Endothelial cell of umbilical vein (primary cell): ENCODE measurements at regions of chr12 and their contacts with region 1.

Region 1: DNA sequence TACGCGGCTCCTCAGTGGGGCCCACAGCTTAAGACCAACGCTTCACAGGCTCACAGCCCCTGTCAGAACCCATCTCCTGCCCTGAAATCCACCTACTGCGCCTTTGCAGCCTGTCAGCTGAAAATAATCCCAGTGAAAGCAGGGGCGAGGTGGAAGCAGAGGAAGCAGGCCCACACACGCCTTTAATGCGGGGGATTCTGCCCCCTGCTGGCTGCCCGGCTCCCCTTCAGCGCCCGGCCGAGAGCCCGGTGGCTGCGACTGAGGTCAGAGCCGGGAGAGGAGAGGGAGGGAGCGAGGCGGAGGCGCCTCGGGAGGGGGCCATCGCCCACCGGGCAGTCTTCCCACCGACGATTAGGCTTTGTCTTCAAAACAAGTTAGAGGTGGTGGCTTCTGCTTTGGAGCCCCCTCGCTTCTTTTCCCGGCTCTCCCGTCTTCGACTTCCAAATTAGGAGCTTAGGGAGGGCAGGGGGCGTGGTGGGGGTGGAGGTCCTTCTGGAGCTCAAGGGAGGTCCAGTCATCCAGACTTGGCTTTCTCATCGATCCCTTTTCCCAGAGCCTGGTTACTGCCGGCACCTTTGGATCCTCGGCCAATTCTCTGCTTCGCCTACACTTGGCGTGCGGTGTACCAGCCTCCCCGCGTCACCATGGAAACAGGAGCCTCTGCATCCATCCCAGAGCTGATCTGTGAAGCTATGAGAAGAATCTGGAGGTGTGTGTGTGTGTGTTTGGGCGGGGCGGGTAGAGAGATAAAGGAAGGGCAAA is 25.2 kb upstream of the RND1 start:
- DNase-seq: peak; percentile 76
- H3K4me3 ChIP-seq: no peak overlapping the region
- H3K27ac ChIP-seq: no peak overlapping the region
- H3K4me1 ChIP-seq: no peaks in the 10 kb centered on the region
- H3K27me3 ChIP-seq: peaks cover 5 to 7% of the 10 kb centered on the region in 2 experiments
- CTCF ChIP-seq: peak; percentile 95
- POLR2A ChIP-seq: no peak

Region 2: GRCh38 chr12:48690990-48691389 is 199.8 kb before region 1 on chr12:
- CTCF ChIA-PET with region 1: no interaction called
- POLR2A ChIA-PET with region 1: no interaction called
- dilution Hi-C with region 1: no loop called
- intact Hi-C with region 1: no loop called
- DNase-seq: no peak
- H3K4me3 ChIP-seq: no peak overlapping the region
- H3K27ac ChIP-seq: no peak overlapping the region
- H3K4me1 ChIP-seq: no peaks in the 10 kb centered on the region
- H3K27me3 ChIP-seq: no peaks in the 10 kb centered on the region
- CTCF ChIP-seq: no peak
- POLR2A ChIP-seq: no peak

Region 3: DNA sequence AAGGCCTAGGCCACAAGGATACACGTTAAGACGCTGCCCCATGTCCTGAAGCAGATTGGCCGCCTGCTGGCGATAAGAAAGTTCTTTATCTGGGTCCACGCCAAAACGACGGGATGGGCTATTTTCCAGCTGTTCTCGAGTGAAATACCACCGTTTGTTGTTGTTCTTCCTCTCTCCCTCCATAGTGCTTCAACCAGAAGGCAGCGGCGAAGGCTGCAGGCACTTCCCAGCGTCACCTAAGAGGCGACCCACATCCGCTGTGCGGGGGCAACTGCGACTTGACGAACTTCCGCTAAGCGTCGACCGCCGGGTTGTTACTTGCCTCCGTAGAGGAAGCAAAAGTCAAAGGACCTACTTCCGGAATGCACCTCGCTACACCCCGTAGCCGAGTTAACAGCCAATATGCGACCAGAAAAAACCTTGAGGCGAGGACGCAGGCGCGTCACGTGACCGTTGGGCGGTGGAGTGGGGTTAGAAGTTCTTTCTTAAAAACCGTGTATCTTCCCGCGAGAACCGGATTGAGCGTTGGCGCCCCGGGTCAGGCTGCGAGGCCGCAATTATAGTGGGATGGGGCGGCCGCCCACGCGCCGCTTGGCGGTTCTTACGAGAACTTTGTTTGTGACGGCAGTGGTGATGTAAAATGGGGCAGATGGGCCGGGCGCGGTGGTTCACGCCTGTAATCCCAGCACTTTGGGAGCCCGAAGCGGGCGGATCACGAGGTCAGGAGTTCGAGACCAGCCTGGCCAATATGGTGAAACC is 174.2 kb before region 1 on chr12 and contains the start of gene CCNT1:
- CTCF ChIA-PET with region 1: no interaction called
- POLR2A ChIA-PET with region 1: no interaction called
- dilution Hi-C with region 1: no loop called
- intact Hi-C with region 1: no loop called
- DNase-seq: peak; percentile 100
- H3K4me3 ChIP-seq: peak within 1 kb of the TSS; percentile 65 to 92 (median 71)
- H3K27ac ChIP-seq: peak within 1 kb of the TSS; percentile 90
- H3K4me1 ChIP-seq: peaks cover 16% of the 10 kb centered on the region
- H3K27me3 ChIP-seq: no peaks in the 10 kb centered on the region
- CTCF ChIP-seq: peak; percentile 10 to 31
- POLR2A ChIP-seq: peak; percentile 61
- total RNA-seq, gene CCNT1: 33.0 and 35.1 TPM in 2 replicates

Region 4: GRCh38 chr12:48814262-48815125 is 76.3 kb before region 1 on chr12:
- CTCF ChIA-PET with region 1: interaction called, 3 read pairs
- POLR2A ChIA-PET with region 1: no interaction called
- dilution Hi-C with region 1: no loop called
- intact Hi-C with region 1: loop called (anchors 2 kb)
- DNase-seq: peak; percentile 73
- H3K4me3 ChIP-seq: peak overlapping the region; percentile 45 to 63 (median 54)
- H3K27ac ChIP-seq: peak overlapping the region; percentile 10
- H3K4me1 ChIP-seq: peaks cover 20% of the 10 kb centered on the region
- H3K27me3 ChIP-seq: no peaks in the 10 kb centered on the region
- CTCF ChIP-seq: peak; percentile 98 to 100
- POLR2A ChIP-seq: no peak

Region 5: GRCh38 chr12:48873096-48873495 is 17.7 kb before region 1 on chr12:
- CTCF ChIA-PET with region 1: interaction called, 68 read pairs
- POLR2A ChIA-PET with region 1: no interaction called
- dilution Hi-C with region 1: no loop called
- intact Hi-C with region 1: no loop called
- DNase-seq: no peak
- H3K4me3 ChIP-seq: no peak overlapping the region
- H3K27ac ChIP-seq: no peak overlapping the region
- H3K4me1 ChIP-seq: no peaks in the 10 kb centered on the region
- H3K27me3 ChIP-seq: no peaks in the 10 kb centered on the region
- CTCF ChIP-seq: no peak
- POLR2A ChIP-seq: no peak

Region 6: DNA sequence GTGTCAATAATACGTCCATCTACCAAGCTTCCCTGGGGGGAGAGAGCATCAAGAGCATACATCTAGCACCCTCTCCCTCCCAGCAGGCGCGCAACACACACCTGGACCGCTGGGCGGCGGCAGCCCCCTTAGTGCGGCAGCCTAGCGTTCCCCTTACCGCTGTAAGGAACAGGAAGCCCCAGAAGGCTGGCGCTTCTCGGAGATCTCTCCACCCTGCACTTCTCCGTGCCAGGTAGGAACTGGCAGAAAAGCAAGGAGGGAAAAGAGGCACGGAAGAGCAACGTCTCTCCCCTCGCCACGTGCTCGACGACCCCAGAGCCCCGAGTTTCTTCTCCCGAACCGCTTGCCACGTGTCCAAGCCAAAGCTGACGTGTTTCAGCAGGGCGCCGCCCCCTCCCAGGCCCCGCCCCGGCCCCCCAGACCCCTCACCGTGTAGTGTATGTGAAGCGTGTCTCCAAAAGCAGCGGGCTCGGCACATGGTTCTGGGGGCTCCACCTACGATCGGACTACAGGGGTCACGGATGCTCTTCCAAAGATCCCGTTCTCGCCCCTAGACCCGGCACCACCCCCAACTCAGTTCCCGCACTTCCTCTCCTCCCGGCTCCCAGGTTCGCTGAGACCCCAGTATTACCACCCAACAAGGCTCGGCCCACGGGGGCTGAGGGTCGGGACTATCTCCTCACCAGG is 33.9 kb after region 1 on chr12:
- CTCF ChIA-PET with region 1: interaction called, 14 read pairs
- POLR2A ChIA-PET with region 1: no interaction called
- dilution Hi-C with region 1: no loop called
- intact Hi-C with region 1: no loop called
- DNase-seq: peak; percentile 78
- H3K4me3 ChIP-seq: peak overlapping the region; percentile 77 to 98 (median 86)
- H3K27ac ChIP-seq: peak overlapping the region; percentile 56
- H3K4me1 ChIP-seq: peaks cover 11% of the 10 kb centered on the region
- H3K27me3 ChIP-seq: no peaks in the 10 kb centered on the region
- CTCF ChIP-seq: peak; percentile 45 to 72
- POLR2A ChIP-seq: no peak

Region 7: GRCh38 chr12:48988030-48988649 is 97.3 kb after region 1 on chr12:
- CTCF ChIA-PET with region 1: interaction called, 13 read pairs
- POLR2A ChIA-PET with region 1: no interaction called
- dilution Hi-C with region 1: no loop called
- intact Hi-C with region 1: no loop called
- DNase-seq: peak; percentile 61
- H3K4me3 ChIP-seq: no peak overlapping the region
- H3K27ac ChIP-seq: no peak overlapping the region
- H3K4me1 ChIP-seq: no peaks in the 10 kb centered on the region
- H3K27me3 ChIP-seq: peaks cover 53 to 60% of the 10 kb centered on the region in 2 experiments
- CTCF ChIP-seq: peak; percentile 92 to 93
- POLR2A ChIP-seq: no peak

Region 8: DNA sequence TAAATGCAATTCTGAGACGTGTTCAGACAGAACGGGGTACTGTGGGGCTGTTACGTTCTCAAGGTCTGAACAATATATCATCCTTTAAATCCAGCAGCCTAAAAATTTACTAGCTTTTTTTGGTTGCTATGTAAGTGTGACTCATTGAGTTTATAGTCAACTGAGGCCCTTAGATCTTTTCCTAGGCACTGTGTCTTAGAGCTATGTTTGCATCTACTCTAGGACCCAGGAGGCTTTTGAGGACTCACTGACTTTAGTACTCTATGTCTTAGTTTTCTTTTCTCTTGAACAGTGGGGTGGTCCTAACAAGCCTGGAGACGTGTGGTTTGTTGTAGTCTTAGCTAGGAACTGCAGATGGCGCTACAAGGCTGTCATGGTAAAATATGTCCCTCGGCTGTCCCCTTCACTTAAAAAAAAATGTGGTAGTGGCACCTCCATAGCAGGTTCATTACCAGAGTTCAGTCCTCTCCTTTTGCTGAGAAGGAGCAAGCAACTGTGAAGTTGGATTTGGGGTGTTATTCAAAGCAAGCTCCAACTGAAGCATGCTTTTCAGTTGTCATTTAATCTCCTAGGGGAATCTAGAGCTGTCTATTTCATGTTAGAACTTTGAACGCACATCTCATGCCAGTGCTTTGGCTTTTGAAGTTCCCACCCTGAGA is 467.8 kb after region 1 on chr12:
- CTCF ChIA-PET with region 1: no interaction called
- POLR2A ChIA-PET with region 1: no interaction called
- dilution Hi-C with region 1: no loop called
- intact Hi-C with region 1: no loop called
- DNase-seq: peak; percentile 82
- H3K4me3 ChIP-seq: no peak overlapping the region
- H3K27ac ChIP-seq: no peak overlapping the region
- H3K4me1 ChIP-seq: no peaks in the 10 kb centered on the region
- H3K27me3 ChIP-seq: no peaks in the 10 kb centered on the region
- CTCF ChIP-seq: peak; percentile 74 to 76
- POLR2A ChIP-seq: no peak